ENCODE measurements at regions of chr7 and their contacts with region 1.

Region 1: DNA sequence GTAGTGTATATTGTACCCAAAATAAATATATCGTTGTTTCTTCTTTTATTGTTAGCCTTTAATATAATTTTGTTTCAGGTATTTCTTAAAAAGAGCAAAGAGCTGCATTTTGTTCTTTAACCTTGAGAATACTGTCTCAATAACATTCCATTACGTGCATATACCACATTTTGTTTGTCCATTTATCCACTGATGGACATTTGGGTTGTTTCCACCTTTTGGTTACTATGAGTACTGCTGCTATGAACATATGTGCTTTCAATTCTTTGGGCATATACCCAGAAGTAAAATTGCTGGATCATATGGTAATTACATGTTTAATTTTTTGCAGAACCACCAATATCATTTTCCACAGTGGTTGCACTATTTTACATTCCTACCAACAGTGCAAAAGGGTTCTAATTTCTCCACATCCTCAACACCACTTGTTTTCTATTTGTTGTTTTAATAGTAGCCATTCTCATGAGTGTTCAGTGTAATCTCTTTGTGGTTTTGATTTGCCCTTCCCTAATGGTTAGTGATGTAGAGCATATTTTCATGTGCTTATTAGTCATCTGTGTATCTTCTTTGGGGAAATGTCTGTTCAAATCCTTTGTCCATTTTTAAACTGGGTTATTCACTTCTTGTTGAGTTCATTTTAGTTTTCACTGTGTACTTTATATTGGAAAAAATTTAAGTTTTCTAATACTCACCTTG is 102.0 kb downstream of the HIBADH start:
- DNase-seq: peak; percentile 66
- ATAC-seq: peak; percentile 98
- H3K4me3 ChIP-seq: no peak overlapping the region
- H3K27ac ChIP-seq: peak overlapping the region; percentile 44
- H3K4me1 ChIP-seq: peaks cover 17% of the 10 kb centered on the region
- H3K27me3 ChIP-seq: no peaks in the 10 kb centered on the region
- CTCF ChIP-seq: peak; percentile 32; the same call in 1 of the 2 replicates

Region 2: DNA sequence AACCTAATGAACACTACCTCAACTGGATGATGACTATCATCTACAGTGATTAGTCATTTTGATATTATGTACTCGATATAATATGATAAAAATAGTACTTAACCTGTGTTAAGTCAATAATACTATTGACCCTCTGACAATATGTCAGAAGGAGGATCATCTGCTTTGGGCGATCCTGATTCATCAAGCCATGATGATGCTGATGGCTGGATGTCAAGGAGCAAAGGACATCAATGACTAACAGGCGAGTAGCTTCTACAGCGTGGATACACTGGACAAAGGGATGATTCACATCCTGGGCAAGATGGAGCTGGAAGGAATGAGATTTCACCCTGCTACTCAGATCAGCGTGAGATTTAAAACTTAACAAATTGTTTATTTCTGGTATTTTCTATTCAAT is 601.9 kb before region 1 on chr7:
- CTCF ChIA-PET with region 1: no interaction called
- POLR2A ChIA-PET with region 1: no interaction called
- intact Hi-C with region 1: no loop called
- DNase-seq: peak; percentile 93
- ATAC-seq: peak; percentile 96
- H3K4me3 ChIP-seq: no peak overlapping the region
- H3K27ac ChIP-seq: peak overlapping the region; percentile 86
- H3K4me1 ChIP-seq: peaks cover 20% of the 10 kb centered on the region
- H3K27me3 ChIP-seq: no peaks in the 10 kb centered on the region
- CTCF ChIP-seq: no peak

Region 3: GRCh38 chr7:27442446-27442845 is 118.2 kb before region 1 on chr7:
- CTCF ChIA-PET with region 1: no interaction called
- POLR2A ChIA-PET with region 1: no interaction called
- intact Hi-C with region 1: loop called (anchors 5 kb)
- DNase-seq: peak; percentile 94
- ATAC-seq: peak; percentile 91
- H3K4me3 ChIP-seq: no peak overlapping the region
- H3K27ac ChIP-seq: peak overlapping the region; percentile 72
- H3K4me1 ChIP-seq: peaks cover 23% of the 10 kb centered on the region
- H3K27me3 ChIP-seq: no peaks in the 10 kb centered on the region
- CTCF ChIP-seq: no peak